H1 (cell line): ENCODE measurements at regions of chr5 and their contacts with region 1.

Region 1: DNA sequence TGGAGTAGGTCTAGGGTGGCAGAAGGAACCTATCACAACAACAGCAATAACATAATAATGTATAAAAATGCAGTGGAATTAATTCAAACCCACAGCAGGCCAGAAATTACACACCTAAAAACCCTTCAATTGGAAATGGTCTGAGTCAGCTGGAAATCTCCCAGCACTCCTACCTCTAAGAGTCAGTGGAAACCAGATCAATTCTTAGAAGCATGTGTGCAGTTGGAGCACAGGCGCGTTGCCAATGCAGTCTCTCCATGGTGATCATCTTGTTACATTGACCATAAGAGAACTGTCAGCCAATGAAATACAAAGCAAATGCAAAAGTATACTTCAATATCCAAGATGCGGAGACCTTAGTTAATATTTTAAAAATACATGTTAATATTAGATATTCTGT is 15.1 kb upstream of the CSNK1G3 start:
- DNase-seq: no peak
- H3K4me3 ChIP-seq: no peak overlapping the region
- H3K27ac ChIP-seq: no peak overlapping the region
- H3K4me1 ChIP-seq: peaks cover 0 to 3% (median 0%) of the 10 kb centered on the region in 4 experiments; a peak in 1 of 7 replicates
- H3K27me3 ChIP-seq: no peaks in the 10 kb centered on the region
- CTCF ChIP-seq: no peak
- EP300 ChIP-seq: no peak
- POLR2A ChIP-seq: no peak
- RAD21 ChIP-seq: no peak

Region 2: DNA sequence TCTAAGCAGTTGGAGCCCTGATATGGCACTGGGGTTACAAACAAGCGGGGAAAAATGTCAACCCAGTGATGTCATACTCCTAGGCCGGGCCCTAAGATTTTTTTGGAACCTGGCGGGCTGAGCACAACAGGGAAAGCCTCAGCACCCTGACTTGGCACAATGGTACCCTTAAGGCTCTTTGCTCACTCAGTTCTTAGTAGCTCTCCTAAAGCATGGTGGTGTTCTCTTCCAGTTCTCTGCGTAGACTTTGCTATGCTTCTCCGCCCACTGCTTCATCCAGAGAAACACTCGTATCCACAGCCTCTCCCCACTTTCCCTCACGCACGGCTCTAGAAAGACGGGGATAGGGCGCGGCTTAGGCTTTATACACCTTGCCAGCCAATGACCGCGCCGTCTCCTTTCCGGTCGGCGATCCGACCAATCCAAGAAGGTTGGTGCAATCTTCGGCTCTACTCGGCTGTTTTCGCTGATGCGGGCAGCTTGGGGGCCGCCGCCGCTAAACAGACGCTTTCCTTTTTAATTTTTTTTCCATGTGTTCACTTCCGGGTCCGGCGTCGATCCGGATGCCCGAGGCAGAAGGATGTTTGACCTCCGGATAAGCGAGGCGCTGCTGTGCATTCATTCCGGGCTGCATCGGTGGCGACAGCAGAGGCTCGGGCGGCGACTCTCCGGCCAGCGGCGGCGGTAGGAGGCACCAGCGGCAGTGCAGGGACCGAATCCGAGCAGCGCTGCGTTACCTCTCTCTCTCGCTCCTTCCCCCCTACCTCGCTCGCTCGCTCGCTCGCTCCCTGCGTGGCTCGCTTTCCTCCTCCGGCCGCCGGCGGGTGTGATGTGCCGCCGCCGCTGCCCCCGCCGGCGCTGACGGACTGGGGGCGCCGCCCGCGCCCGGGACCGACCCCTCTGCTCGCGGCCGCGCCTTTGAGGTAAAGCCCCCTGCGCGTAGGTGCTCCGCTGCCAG is 15.0 kb after region 1 on chr5 and contains the start of gene CSNK1G3:
- CTCF ChIA-PET with region 1: interaction called, 7 read pairs
- POLR2A ChIA-PET with region 1: interaction called, 68 read pairs
- DNase-seq: peak; percentile 87 to 91
- H3K4me3 ChIP-seq: peak within 1 kb of the TSS; percentile 67 to 94 (median 80)
- H3K27ac ChIP-seq: peak within 1 kb of the TSS; percentile 87
- H3K4me1 ChIP-seq: peaks cover 0 to 9% (median 4%) of the 10 kb centered on the region in 4 experiments; a peak in 5 of 7 replicates
- H3K27me3 ChIP-seq: no peaks in the 10 kb centered on the region
- CTCF ChIP-seq: peak in 1 of 3 experiments; percentile 12; a peak in 1 of 4 replicates
- EP300 ChIP-seq: 0 out of 3 replicates have a peak, but pooled peaks of 1 of the 2 experiments have one; percentile 45
- POLR2A ChIP-seq: peak; percentile 97 to 99
- RAD21 ChIP-seq: 0 out of 4 replicates have a peak, but pooled peaks of 1 of the 2 experiments have one; percentile 4
- total RNA-seq, gene CSNK1G3: 54.8 and 58.9 TPM in 2 replicates